GM10248 (cell line): ENCODE measurements at regions of chr1 and their contacts with region 1.

Region 1: DNA sequence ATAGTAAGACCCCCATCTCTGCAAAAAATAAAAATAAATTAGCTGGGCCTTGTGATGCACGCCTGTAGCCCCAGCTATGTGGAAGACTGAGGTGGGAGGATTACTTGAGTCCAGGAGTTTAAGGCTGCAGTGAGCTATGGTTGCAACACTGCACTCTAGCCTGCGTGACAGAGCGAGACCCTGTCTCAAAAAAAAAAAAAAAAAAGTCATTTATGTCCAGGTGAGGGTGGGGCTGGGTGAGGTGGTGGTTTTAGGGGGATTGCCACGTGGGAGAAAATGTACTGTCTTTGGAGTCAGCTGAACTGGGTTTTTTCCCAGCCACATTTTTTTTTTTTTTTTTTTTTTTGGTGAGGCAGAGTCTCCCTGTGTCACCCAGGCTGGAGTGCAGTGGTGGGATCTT is 6.7 kb downstream of the PIK3CD start:
- DNase-seq: no peak
- CTCF ChIP-seq: no peak

Region 2: DNA sequence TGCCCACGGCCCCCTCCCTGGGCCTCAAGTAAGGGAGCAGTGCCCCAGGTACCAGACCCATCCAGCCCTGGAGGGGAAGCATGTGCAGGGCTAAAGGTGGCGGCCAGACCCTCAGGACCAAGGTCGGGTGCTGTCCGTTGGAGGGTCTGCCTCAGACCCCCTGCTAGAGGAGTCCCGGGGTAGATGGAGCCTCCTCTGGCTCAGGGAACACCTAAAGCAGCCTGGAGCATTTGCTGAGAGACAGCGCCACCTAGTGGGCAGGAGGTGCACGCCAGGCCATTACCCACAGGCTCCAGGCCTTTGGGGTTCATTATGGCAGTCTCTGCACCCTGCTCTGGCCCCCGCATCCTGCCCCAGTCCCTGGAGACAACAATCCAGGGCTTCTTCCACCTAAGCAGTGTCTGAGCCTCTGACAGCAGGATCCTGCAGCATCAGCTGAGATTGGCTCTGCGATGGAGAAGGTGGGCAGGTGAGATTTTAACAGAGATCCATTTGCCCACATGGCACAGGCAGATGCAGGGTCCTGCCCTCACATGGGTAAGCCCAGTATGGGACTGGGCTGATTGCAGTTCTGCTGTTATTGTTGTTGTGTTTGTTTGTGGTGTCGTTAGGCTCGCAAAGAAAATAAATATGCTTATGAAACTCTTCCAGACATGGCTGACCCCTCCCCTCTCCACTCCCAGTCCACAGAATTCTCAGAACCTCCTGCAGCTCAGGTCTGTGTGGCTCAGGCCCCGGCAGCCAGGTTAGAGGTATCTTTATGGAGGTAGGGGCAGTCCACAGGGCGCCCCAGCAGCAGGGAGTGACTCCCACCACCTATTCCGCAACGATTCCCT is 209.4 kb after region 1 on chr1:
- CTCF ChIA-PET with region 1: no interaction called
- POLR2A ChIA-PET with region 1: no interaction called
- DNase-seq: peak; percentile 91
- CTCF ChIP-seq: peak; percentile 99

Region 3: GRCh38 chr1:10456661-10457060 is 798.5 kb after region 1 on chr1:
- CTCF ChIA-PET with region 1: no interaction called
- POLR2A ChIA-PET with region 1: interaction called, 10 read pairs
- DNase-seq: no peak
- CTCF ChIP-seq: no peak